GM12878 (cell line): ENCODE measurements at regions of chr6 and their contacts with region 1.

Region 1: GRCh38 chr6:32637219-32637880 is at the start of gene HLA-DQA1:
- DNase-seq: peak; percentile 91
- ATAC-seq: peak; percentile 74
- H3K4me3 ChIP-seq: peak within 1 kb of the TSS; percentile 70
- H3K27ac ChIP-seq: peak within 1 kb of the TSS; percentile 95
- H3K4me1 ChIP-seq: peaks cover 12% of the 10 kb centered on the region
- H3K27me3 ChIP-seq: no peaks in the 10 kb centered on the region
- CTCF ChIP-seq: no peak
- EP300 ChIP-seq: no peak
- POLR2A ChIP-seq: peak; percentile 95
- RAD21 ChIP-seq: no peak
- polyA plus RNA-seq, gene HLA-DQA1: 327 to 423 TPM

Region 2: GRCh38 chr6:32439602-32440214 is 197.6 kb before region 1 on chr6 and contains the start of gene HLA-DRA:
- CTCF ChIA-PET with region 1: no interaction called
- POLR2A ChIA-PET with region 1: interaction called, 29 read pairs
- RAD21 ChIA-PET with region 1: interaction called, 11 read pairs
- SMC1A ChIA-PET with region 1: interaction called, 6 read pairs
- in situ Hi-C with region 1: no loop called
- intact Hi-C with region 1: loop called (anchors 5 kb)
- DNase-seq: peak; percentile 99
- ATAC-seq: peak; percentile 71
- H3K4me3 ChIP-seq: peak within 1 kb of the TSS; percentile 99
- H3K27ac ChIP-seq: peak within 1 kb of the TSS; percentile 100
- H3K4me1 ChIP-seq: peaks cover 29% of the 10 kb centered on the region
- H3K27me3 ChIP-seq: no peaks in the 10 kb centered on the region
- CTCF ChIP-seq: no peak
- EP300 ChIP-seq: peak; percentile 66 to 68; a peak in 3 of 4 replicates
- POLR2A ChIP-seq: peak; percentile 95
- RAD21 ChIP-seq: no peak
- polyA plus RNA-seq, gene HLA-DRA: 4,131 to 6,024 TPM

Region 3: GRCh38 chr6:32609731-32610640 is 27.4 kb before region 1 on chr6:
- CTCF ChIA-PET with region 1: interaction called, 3 read pairs
- POLR2A ChIA-PET with region 1: interaction called, 27 read pairs
- RAD21 ChIA-PET with region 1: interaction called, 21 read pairs
- SMC1A ChIA-PET with region 1: interaction called, 21 read pairs
- in situ Hi-C with region 1: no loop called
- intact Hi-C with region 1: loop called (anchors 2 kb)
- DNase-seq: peak; percentile 100
- ATAC-seq: peak; percentile 84
- H3K4me3 ChIP-seq: peak overlapping the region; percentile 3; the same call in 1 of the 2 replicates
- H3K27ac ChIP-seq: peak overlapping the region; percentile 95
- H3K4me1 ChIP-seq: peaks cover 17% of the 10 kb centered on the region
- H3K27me3 ChIP-seq: no peaks in the 10 kb centered on the region
- CTCF ChIP-seq: no peak
- EP300 ChIP-seq: peak; percentile 30 to 68; a peak in 2 of 4 replicates
- POLR2A ChIP-seq: peak; percentile 59; the same call in 1 of the 2 replicates
- RAD21 ChIP-seq: no peak

Region 4: GRCh38 chr6:32622545-32623401 is 14.6 kb before region 1 on chr6:
- CTCF ChIA-PET with region 1: interaction called, 12 read pairs
- POLR2A ChIA-PET with region 1: interaction called, 117 read pairs
- RAD21 ChIA-PET with region 1: interaction called, 102 read pairs
- SMC1A ChIA-PET with region 1: interaction called, 124 read pairs
- in situ Hi-C with region 1: no loop called
- intact Hi-C with region 1: loop called (anchors 2 kb)
- DNase-seq: peak; percentile 96
- ATAC-seq: peak; percentile 91
- H3K4me3 ChIP-seq: peak overlapping the region; percentile 54
- H3K27ac ChIP-seq: peak overlapping the region; percentile 98
- H3K4me1 ChIP-seq: peaks cover 24% of the 10 kb centered on the region
- H3K27me3 ChIP-seq: no peaks in the 10 kb centered on the region
- CTCF ChIP-seq: peak; percentile 33 to 49 (median 48); a peak in 5 of 6 replicates
- EP300 ChIP-seq: peak in 1 of 2 experiments; percentile 96
- POLR2A ChIP-seq: peak; percentile 72
- RAD21 ChIP-seq: peak; percentile 40; the same call in 1 of the 2 replicates

Region 5: DNA sequence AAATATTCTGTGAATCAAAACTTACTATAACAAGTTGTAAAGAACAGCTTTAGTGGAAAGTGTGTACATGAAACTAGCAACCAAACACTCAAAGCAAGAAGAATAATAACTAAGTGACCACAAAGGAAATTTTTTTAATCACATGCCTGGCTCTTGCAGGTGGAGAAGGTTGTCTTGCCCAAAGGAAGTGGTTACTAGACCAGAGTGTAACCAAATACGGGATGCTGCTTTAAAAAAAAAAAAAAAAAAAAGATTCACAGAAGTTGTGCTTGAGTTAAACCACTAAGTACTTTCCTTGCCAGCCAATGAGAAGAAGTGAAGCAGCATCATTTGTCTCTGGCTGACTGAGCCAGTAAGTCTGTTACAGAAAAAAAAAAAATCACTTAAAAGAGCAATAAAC is 48.3 kb after region 1 on chr6:
- CTCF ChIA-PET with region 1: interaction called, 6 read pairs
- POLR2A ChIA-PET with region 1: interaction called, 21 read pairs
- RAD21 ChIA-PET with region 1: interaction called, 20 read pairs
- SMC1A ChIA-PET with region 1: interaction called, 7 read pairs
- in situ Hi-C with region 1: no loop called
- intact Hi-C with region 1: no loop called
- DNase-seq: peak; percentile 95
- ATAC-seq: peak; percentile 89
- H3K4me3 ChIP-seq: no peak overlapping the region
- H3K27ac ChIP-seq: peak overlapping the region; percentile 40; the same call in 1 of the 2 replicates
- H3K4me1 ChIP-seq: peaks cover 16% of the 10 kb centered on the region; the same call in 1 of the 2 replicates
- H3K27me3 ChIP-seq: no peaks in the 10 kb centered on the region
- CTCF ChIP-seq: no peak
- EP300 ChIP-seq: peak; percentile 74 to 99; a peak in 3 of 4 replicates
- POLR2A ChIP-seq: no peak
- RAD21 ChIP-seq: no peak